ENCODE measurements at regions of chr1 and their contacts with region 1.

Region 1: DNA sequence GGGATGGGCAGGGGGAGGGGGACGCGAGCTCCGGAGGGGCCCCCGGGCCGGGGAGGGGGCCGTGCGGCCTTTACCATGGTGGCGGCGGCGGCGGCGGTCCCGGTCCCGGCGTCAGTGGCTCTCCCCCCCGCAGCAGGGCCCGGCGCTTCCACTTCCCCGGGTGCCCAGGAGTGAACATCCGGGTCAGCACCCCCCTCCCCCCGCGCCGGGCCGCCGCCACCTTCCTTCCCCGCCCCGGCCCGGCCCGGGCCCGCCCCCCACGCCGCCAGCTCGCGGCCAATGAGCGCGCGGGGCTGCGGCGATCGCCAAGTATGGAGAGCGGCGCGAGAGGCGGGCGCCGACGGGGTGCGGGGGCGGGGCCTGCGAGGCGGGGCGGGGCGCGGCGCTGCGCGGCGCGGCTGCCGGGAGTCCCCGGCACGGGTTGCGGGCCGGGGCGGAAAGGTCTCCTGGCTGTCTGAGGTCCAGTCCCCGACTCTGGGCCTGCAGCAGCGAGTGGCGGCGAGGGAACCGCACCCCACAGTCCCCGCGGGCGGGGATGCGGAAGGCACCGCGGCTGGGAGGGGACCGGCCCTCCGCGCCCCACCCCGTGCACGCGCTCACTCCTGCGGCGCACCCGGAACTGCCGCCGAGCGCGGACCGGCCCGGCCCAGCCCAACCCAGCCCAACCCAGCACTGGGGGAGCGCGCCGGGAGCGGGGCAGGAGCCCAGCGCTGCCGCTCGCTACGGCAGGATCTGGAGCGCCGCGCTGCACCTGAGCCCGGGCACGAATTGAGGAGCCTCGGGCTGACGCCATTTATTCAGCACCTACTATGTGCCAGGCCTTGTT is at the start of gene CAPZB:
- DNase-seq: peak; percentile 84 to 94 (median 91)
- ATAC-seq: peak; percentile 94
- H3K4me3 ChIP-seq: peak within 1 kb of the TSS; percentile 87
- H3K4me3 Mint-ChIP-seq: peak within 1 kb of the TSS; percentile 92 to 98 (median 94)
- H3K27ac ChIP-seq: peak within 1 kb of the TSS; percentile 97
- H3K27ac Mint-ChIP-seq: peak within 1 kb of the TSS; percentile 88 to 97 (median 96)
- H3K4me1 ChIP-seq: peaks cover 52 to 59% of the 10 kb centered on the region in 2 donors
- H3K4me1 Mint-ChIP-seq: peaks cover 59 to 71% (median 67%) of the 10 kb centered on the region in 7 donors
- H3K27me3 ChIP-seq: no peaks in the 10 kb centered on the region
- H3K27me3 Mint-ChIP-seq: no peaks in the 10 kb centered on the region
- total RNA-seq, gene CAPZB: 216 to 519 (median 264) TPM

Region 2: DNA sequence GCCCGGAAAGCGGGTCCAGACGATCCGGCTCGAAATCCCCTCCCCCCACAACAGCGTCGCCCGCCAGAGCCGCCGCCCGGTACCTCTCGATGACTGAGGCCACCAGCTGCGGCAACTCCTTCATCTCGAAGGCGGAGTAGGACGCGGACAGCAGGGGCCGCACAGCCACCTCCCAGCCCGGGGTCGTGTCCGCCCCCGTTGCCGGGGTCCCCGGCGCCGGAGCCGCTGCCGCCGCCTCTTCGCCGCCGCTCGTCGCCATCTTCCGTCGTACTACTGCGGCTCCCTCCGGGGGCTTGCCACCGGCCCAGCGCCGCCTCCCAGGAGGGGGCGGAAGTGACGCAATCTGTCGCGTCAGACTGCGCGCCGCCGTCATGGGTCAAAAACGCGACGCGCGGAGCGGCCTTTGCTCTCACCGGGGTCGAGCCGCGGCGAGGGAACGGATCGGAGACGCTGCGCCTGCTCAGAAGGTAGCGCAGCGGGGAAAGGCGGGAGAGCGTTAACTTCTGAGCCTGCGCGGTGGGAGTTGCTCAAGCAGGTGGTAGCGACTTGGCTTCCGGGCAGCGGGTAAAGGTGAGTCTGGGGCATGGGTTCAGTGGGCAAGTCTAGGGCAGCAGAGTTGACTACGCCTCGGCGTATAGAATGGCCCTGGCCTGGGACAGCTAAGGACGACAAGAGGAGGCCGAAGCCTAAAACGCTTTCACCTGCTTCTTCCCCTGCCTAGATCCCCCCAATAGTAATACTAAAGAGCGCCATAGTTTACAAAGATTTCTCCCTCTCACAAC is 275.4 kb before region 1 on chr1 and contains the start of gene UBR4:
- CTCF ChIA-PET with region 1: no interaction called
- POLR2A ChIA-PET with region 1: no interaction called
- intact Hi-C with region 1: loop called in 1 of 2 experiments (anchors 2 kb)
- DNase-seq: peak; percentile 95 to 97 (median 96)
- ATAC-seq: peak; percentile 95
- H3K4me3 ChIP-seq: peak within 1 kb of the TSS; percentile 60
- H3K4me3 Mint-ChIP-seq: peak within 1 kb of the TSS; percentile 83 to 98 (median 94)
- H3K27ac ChIP-seq: peak within 1 kb of the TSS; percentile 85
- H3K27ac Mint-ChIP-seq: peak within 1 kb of the TSS; percentile 94 to 99 (median 97)
- H3K4me1 ChIP-seq: peaks cover 24 to 38% of the 10 kb centered on the region in 2 donors
- H3K4me1 Mint-ChIP-seq: peaks cover 49 to 87% (median 82%) of the 10 kb centered on the region in 7 donors
- H3K27me3 ChIP-seq: no peaks in the 10 kb centered on the region
- H3K27me3 Mint-ChIP-seq: peaks cover 0 to 2% (median 0%) of the 10 kb centered on the region in 5 donors
- total RNA-seq, gene UBR4: 120 to 174 (median 159) TPM

Region 3: GRCh38 chr1:19287436-19288185 is 198.0 kb before region 1 on chr1:
- CTCF ChIA-PET with region 1: no interaction called
- POLR2A ChIA-PET with region 1: no interaction called
- intact Hi-C with region 1: no loop called
- DNase-seq: no peak
- ATAC-seq: no peak
- H3K4me3 ChIP-seq: no peak overlapping the region
- H3K4me3 Mint-ChIP-seq: peak overlapping the region; percentile 37 to 79 (median 69)
- H3K27ac ChIP-seq: no peak overlapping the region
- H3K27ac Mint-ChIP-seq: peak overlapping the region in 1 of 9 donors; percentile 16
- H3K4me1 ChIP-seq: peaks cover 3 to 7% of the 10 kb centered on the region in 2 donors
- H3K4me1 Mint-ChIP-seq: peaks cover 0 to 11% (median 9%) of the 10 kb centered on the region in 7 donors
- H3K27me3 ChIP-seq: no peaks in the 10 kb centered on the region
- H3K27me3 Mint-ChIP-seq: peaks cover 9 to 17% (median 10%) of the 10 kb centered on the region in 5 donors

Region 4: DNA sequence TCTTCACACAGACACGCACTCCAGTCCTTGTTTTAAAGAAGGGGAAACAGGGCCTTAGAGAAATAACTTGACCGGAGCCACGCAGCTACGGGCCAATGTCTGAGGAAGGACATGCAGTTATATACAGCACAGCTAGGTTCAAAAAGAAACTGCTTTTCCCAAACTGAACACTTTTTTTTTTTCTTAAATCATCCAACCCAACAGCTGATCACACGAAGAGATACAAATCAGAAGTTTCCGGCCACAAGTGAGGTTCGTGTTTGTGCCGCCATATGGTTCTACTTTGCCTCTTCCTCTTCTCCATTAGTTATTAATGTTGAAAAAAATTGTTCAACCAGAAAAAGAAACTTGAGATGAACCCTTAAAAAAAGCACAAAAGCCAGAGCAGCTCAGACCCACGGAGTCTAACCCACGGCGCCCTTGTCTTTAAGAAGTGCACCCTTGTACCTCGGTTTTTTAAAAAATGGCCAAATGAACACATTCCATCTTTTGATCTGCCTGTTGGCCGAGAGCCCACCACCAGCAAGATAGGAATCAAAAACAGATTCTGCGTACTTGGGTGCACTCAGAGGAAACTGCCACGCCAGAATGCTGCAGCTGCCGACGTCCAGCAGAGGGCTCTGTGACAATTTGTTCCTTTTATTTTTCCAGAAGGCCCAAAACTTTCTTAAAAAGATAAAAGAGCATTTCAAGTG is 94.5 kb before region 1 on chr1:
- CTCF ChIA-PET with region 1: interaction called, 7 read pairs
- POLR2A ChIA-PET with region 1: interaction called, 8 read pairs
- intact Hi-C with region 1: loop called (anchors 1 kb)
- DNase-seq: peak; percentile 33 to 84 (median 76)
- ATAC-seq: peak; percentile 84
- H3K4me3 ChIP-seq: peak overlapping the region; percentile 46
- H3K4me3 Mint-ChIP-seq: peak overlapping the region; percentile 78 to 90 (median 84)
- H3K27ac ChIP-seq: peak overlapping the region; percentile 60
- H3K27ac Mint-ChIP-seq: peak overlapping the region; percentile 82 to 98 (median 94)
- H3K4me1 ChIP-seq: peaks cover 39 to 47% of the 10 kb centered on the region in 2 donors
- H3K4me1 Mint-ChIP-seq: peaks cover 58 to 91% (median 83%) of the 10 kb centered on the region in 7 donors
- H3K27me3 ChIP-seq: no peaks in the 10 kb centered on the region
- H3K27me3 Mint-ChIP-seq: no peaks in the 10 kb centered on the region

Region 5: DNA sequence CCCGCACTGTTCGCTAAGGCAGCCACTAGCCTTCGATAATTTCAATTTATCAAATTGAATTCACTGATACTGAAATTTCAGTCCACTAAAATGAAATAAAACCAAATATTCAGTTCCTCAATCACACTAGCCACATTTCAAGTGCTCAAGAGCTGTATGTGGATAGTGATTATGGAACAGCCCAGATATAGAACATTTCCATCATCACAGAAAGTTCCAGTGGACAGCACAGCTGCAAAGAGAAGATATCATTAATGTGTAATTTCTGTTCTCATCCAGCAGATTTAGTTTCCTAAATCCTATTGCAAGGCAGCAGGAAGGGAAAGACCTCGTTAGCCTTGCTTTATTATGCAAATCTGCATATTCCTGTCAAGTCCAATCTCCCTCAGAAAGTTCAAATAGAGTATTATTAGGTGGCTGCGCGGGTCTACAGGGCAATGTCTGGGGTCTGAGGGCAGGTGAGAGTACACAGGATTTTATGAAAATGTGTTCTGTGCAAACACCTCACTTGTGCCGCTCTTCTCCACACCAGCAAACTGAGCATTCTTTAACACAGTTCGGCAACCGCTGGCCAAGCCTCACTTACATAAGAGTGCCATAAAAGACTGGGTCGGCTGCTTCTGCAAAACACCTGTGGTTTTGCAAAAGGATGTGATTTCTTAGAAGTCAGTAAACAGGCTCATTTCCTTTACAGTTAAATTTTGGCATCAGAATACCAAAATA is 22.6 kb before region 1 on chr1:
- CTCF ChIA-PET with region 1: interaction called, 7 read pairs
- POLR2A ChIA-PET with region 1: interaction called, 492 read pairs
- intact Hi-C with region 1: loop called (anchors 1 kb)
- DNase-seq: peak in 7 of 9 donors; percentile 69 to 88 (median 82)
- ATAC-seq: peak; percentile 90
- H3K4me3 ChIP-seq: peak overlapping the region; percentile 49
- H3K4me3 Mint-ChIP-seq: peak overlapping the region; percentile 66 to 87 (median 82)
- H3K27ac ChIP-seq: peak overlapping the region; percentile 84
- H3K27ac Mint-ChIP-seq: peak overlapping the region; percentile 86 to 98 (median 95)
- H3K4me1 ChIP-seq: peaks cover 88 to 92% of the 10 kb centered on the region in 2 donors
- H3K4me1 Mint-ChIP-seq: peaks cover 59 to 94% (median 84%) of the 10 kb centered on the region in 7 donors
- H3K27me3 ChIP-seq: no peaks in the 10 kb centered on the region
- H3K27me3 Mint-ChIP-seq: no peaks in the 10 kb centered on the region

Region 6: DNA sequence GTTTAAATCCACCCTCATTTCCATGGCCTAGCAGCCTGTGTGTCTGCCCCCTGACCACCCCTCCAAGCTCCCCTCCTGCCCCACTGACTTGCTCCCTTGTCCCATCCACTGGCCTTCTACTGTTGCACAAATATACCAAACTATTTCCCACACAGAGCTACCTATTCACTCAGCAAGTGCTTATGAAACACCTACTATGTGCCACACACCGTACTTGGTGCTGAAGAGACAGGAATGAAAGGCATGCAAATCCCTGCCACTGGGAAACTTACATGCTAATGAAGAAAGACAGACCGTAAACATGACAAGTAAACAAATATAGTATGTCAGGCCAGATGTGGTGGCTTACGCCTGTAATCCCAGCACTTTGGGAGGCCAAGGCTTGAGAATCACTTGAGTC is 49.6 kb after region 1 on chr1:
- CTCF ChIA-PET with region 1: no interaction called
- POLR2A ChIA-PET with region 1: no interaction called
- intact Hi-C with region 1: no loop called
- DNase-seq: no peak
- ATAC-seq: no peak
- H3K4me3 ChIP-seq: no peak overlapping the region
- H3K4me3 Mint-ChIP-seq: no peak overlapping the region
- H3K27ac ChIP-seq: no peak overlapping the region
- H3K27ac Mint-ChIP-seq: no peak overlapping the region
- H3K4me1 ChIP-seq: no peaks in the 10 kb centered on the region
- H3K4me1 Mint-ChIP-seq: peaks cover 0 to 17% (median 8%) of the 10 kb centered on the region in 7 donors
- H3K27me3 ChIP-seq: no peaks in the 10 kb centered on the region
- H3K27me3 Mint-ChIP-seq: no peaks in the 10 kb centered on the region

Region 7: GRCh38 chr1:19596714-19597495 is 111.3 kb after region 1 on chr1:
- CTCF ChIA-PET with region 1: no interaction called
- POLR2A ChIA-PET with region 1: interaction called, 34 read pairs
- intact Hi-C with region 1: loop called (anchors 1 kb)
- DNase-seq: peak; percentile 86 to 98 (median 97)
- ATAC-seq: peak; percentile 86
- H3K4me3 ChIP-seq: peak overlapping the region; percentile 59
- H3K4me3 Mint-ChIP-seq: peak overlapping the region; percentile 79 to 100 (median 98)
- H3K27ac ChIP-seq: peak overlapping the region; percentile 99
- H3K27ac Mint-ChIP-seq: peak overlapping the region; percentile 98 to 100 (median 99)
- H3K4me1 ChIP-seq: peaks cover 34 to 45% of the 10 kb centered on the region in 2 donors
- H3K4me1 Mint-ChIP-seq: peaks cover 29 to 56% (median 47%) of the 10 kb centered on the region in 7 donors
- H3K27me3 ChIP-seq: no peaks in the 10 kb centered on the region
- H3K27me3 Mint-ChIP-seq: peaks cover 0 to 11% (median 0%) of the 10 kb centered on the region in 5 donors

Region 8: DNA sequence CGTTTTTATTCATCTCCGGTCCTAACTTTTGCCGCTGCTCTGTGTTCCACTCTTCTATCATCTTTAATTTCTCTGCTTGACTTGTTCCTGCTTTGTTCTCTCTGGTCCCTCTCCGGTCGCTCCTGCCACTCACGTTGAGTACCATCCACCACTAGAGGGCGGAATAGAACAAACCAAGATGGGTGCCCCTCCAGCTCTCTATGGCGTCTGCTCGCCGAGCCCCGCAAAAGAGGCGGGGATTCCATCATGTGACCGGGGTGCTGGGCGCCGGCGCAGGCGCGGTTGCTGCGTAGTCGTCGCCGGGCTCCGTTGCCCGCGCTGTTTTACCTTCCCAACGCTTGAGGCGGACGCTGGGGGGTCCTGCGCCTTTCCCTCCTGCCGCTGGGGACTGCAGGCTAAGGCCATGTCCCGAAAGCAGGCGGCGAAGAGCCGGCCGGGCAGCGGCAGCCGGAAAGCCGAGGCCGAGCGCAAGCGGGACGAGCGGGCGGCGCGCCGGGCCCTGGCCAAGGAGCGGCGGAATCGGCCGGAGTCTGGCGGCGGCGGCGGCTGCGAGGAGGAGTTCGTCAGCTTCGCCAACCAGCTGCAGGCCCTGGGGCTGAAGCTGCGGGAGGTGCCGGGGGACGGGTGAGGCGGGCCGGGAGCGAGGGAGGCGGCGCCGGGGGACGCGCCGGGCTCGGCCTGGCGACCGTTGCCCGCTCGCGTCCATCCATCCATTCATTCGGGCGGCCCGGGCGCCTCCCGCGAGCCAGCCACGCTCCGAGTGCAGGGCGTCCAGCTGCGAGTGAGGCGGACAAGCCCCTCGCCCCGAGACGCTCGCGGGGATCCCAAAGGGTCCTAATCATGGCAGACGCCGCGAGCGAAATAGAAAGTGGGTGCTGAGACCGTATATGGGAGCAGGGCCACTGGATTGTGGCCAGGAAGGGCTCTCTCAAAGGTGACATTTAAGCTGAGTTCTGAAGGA is 396.8 kb after region 1 on chr1 and contains the start of gene OTUD3:
- CTCF ChIA-PET with region 1: no interaction called
- POLR2A ChIA-PET with region 1: no interaction called
- intact Hi-C with region 1: loop called in 1 of 2 experiments (anchors 1 kb)
- DNase-seq: peak; percentile 87 to 97 (median 96)
- ATAC-seq: peak; percentile 100
- H3K4me3 ChIP-seq: peak within 1 kb of the TSS; percentile 66
- H3K4me3 Mint-ChIP-seq: peak within 1 kb of the TSS; percentile 77 to 95 (median 88)
- H3K27ac ChIP-seq: peak within 1 kb of the TSS; percentile 82
- H3K27ac Mint-ChIP-seq: peak within 1 kb of the TSS; percentile 3 to 88 (median 75)
- H3K4me1 ChIP-seq: peaks cover 15 to 23% of the 10 kb centered on the region in 2 donors
- H3K4me1 Mint-ChIP-seq: peaks cover 20 to 50% (median 47%) of the 10 kb centered on the region in 7 donors
- H3K27me3 ChIP-seq: no peaks in the 10 kb centered on the region
- H3K27me3 Mint-ChIP-seq: peaks cover 0 to 15% (median 6%) of the 10 kb centered on the region in 5 donors
- total RNA-seq, gene OTUD3: 13.1 to 23.6 (median 20.8) TPM

Region 9: GRCh38 chr1:19974822-19975416 is 489.3 kb after region 1 on chr1:
- CTCF ChIA-PET with region 1: no interaction called
- POLR2A ChIA-PET with region 1: no interaction called
- intact Hi-C with region 1: no loop called
- DNase-seq: peak in 4 of 9 donors; percentile 9 to 25 (median 16)
- ATAC-seq: peak; percentile 47
- H3K4me3 ChIP-seq: no peak overlapping the region
- H3K4me3 Mint-ChIP-seq: no peak overlapping the region
- H3K27ac ChIP-seq: no peak overlapping the region
- H3K27ac Mint-ChIP-seq: no peak overlapping the region
- H3K4me1 ChIP-seq: no peaks in the 10 kb centered on the region
- H3K4me1 Mint-ChIP-seq: peaks cover 0 to 2% (median 0%) of the 10 kb centered on the region in 7 donors
- H3K27me3 ChIP-seq: no peaks in the 10 kb centered on the region
- H3K27me3 Mint-ChIP-seq: peaks cover 12 to 35% (median 28%) of the 10 kb centered on the region in 5 donors

Measured in naive thymus-derived CD4-positive, alpha-beta T cell (primary cell).